ENCODE measurements at regions of chr17 and their contacts with region 1.

Region 1: GRCh38 chr17:76005263-76006149 is 4.9 kb downstream of the CDK3 start:
- DNase-seq: no peak
- ATAC-seq: peak; percentile 37 to 66
- H3K4me3 ChIP-seq: no peak overlapping the region
- H3K27ac ChIP-seq: peak overlapping the region; percentile 25
- H3K4me1 ChIP-seq: peaks cover 33% of the 10 kb centered on the region
- H3K27me3 ChIP-seq: no peaks in the 10 kb centered on the region
- CTCF ChIP-seq: peak; percentile 73

Region 2: GRCh38 chr17:75904749-75905521 is 100.6 kb before region 1 on chr17 and contains the start of gene MRPL38:
- intact Hi-C with region 1: loop called (anchors 10 kb)
- DNase-seq: peak; percentile 97
- ATAC-seq: peak; percentile 93 to 96
- H3K4me3 ChIP-seq: peak within 1 kb of the TSS; percentile 81
- H3K27ac ChIP-seq: peak within 1 kb of the TSS; percentile 91
- H3K4me1 ChIP-seq: peaks cover 44% of the 10 kb centered on the region
- H3K27me3 ChIP-seq: no peaks in the 10 kb centered on the region
- CTCF ChIP-seq: peak; percentile 99
- total RNA-seq, gene MRPL38: 68.9 TPM